Right cardiac atrium (tissue), 5 donors: ENCODE measurements at regions of chr19 and their contacts with region 1.

Region 1: GRCh38 chr19:35249848-35250711 is 1.3 kb downstream of the LSR start:
- DNase-seq: peak in 1 of 3 donors; percentile 27
- ATAC-seq: no peak
- H3K4me3 ChIP-seq: no peak overlapping the region
- H3K27ac ChIP-seq: no peak overlapping the region
- H3K4me1 ChIP-seq: peaks cover 2% of the 10 kb centered on the region
- H3K27me3 ChIP-seq: no peaks in the 10 kb centered on the region

Region 2: GRCh38 chr19:35154525-35155406 is 95.3 kb before region 1 on chr19 and contains the start of gene FXYD5:
- intact Hi-C with region 1: loop called in 1 of 4 experiments (anchors 10 kb)
- DNase-seq: peak; percentile 79 to 87 (median 87)
- ATAC-seq: peak; percentile 91 to 93
- H3K4me3 ChIP-seq: peak within 1 kb of the TSS; percentile 76
- H3K27ac ChIP-seq: peak within 1 kb of the TSS; percentile 70
- H3K4me1 ChIP-seq: no peaks in the 10 kb centered on the region
- H3K27me3 ChIP-seq: no peaks in the 10 kb centered on the region
- total RNA-seq, gene FXYD5: 22.5 to 46.3 (median 31.0) TPM

Region 3: DNA sequence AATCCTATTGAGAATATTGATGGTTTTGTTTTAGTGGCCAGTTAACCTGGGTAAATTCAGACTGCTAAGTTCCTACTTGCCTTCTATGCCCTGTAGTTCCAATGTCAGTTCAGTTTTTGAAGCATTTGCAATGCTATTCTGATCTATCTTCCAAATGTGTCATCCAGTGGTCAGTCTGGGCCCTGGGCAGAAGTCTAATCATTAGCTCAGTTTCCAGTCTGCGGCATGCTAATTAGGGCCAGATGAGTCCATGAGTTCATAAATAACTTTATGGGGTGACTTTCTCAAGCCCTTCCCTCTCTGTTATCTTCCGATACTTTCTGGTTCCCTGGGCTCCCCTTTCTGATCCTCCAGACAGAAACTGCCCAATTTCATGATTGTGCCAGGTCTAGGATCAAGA is 54.2 kb before region 1 on chr19:
- intact Hi-C with region 1: no loop called
- DNase-seq: no peak
- ATAC-seq: no peak
- H3K4me3 ChIP-seq: no peak overlapping the region
- H3K27ac ChIP-seq: no peak overlapping the region
- H3K4me1 ChIP-seq: no peaks in the 10 kb centered on the region
- H3K27me3 ChIP-seq: no peaks in the 10 kb centered on the region

Region 4: DNA sequence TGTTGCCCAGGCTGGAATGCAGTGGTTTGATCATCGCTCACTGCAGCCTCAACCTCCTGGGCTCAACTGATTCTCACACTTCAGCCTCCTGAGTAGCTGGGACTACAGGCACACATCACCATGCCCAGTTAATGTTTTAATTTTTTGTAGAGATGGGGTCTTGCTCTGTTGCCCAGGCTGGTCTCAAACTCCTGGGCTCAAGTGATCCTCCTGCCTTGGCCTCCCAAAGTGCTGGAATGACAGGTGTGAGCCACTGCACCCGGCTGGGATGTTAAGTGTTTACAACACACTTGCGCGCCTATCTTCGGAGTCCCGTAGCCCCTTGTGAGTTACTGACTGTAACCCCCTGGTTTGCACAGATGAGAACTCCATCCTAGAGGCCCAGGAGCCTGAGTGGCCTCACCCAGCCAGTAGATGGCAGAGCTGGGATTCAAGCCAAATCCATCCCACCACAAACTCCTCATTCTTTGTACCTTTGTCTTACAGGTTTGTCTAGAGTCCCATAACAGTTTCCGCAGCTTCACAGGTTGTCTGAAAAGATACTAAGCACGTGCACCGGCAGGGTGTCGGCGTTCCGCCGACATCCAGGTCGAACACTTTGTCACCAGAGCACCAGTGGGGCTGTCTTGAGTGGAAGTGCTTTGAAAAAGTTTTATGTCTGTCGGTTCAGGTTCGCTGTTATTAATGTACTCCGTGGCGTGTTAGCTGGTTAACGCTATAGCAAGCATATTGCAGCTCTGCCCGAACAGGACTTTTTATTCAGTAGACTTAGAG is 56.6 kb after region 1 on chr19:
- intact Hi-C with region 1: no loop called
- DNase-seq: peak in 1 of 3 donors; percentile 28
- ATAC-seq: no peak
- H3K4me3 ChIP-seq: no peak overlapping the region
- H3K27ac ChIP-seq: no peak overlapping the region
- H3K4me1 ChIP-seq: no peaks in the 10 kb centered on the region
- H3K27me3 ChIP-seq: no peaks in the 10 kb centered on the region